ENCODE measurements at regions of chr15 and their contacts with region 1.

Region 1: DNA sequence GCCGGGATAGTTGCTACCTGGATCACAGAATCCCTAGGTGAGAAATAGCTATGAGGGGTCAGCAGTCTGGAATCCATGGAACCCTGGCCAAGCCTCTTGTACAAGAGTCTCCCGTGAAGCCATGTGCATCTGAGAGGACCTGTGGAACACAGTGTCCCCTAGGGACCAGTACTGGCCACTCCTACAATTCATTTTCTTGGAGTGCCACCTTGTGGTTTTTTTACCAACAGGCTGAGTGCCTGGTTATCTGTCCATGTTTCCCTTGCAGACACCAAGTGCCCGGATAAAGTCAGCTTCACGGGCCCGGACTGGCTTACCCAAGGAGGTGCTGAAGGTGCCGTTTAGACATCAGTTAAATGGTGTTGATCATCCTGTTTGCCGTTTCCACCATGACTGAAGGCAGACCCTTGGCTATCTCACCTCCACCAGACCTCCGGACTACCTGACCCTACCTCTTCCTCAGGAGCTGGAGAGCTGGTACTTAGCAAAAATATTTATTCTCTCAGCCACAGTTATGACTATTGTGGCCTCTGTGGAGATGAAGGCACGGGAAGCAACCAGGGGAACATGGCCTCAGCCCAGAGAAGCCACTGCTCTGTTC is 93.9 kb downstream of the RBPMS2 start:
- DNase-seq: peak in 1 of 2 donors; percentile 80
- H3K4me3 ChIP-seq: no peak overlapping the region
- CTCF ChIP-seq: peak in 1 of 3 donors; percentile 14
- POLR2A ChIP-seq: no peak

Region 2: GRCh38 chr15:65286704-65287519 is 605.4 kb after region 1 on chr15 and contains the start of gene PARP16:
- intact Hi-C with region 1: loop called (anchors 10 kb)
- DNase-seq: peak; percentile 86 to 98
- H3K4me3 ChIP-seq: peak within 1 kb of the TSS; percentile 75
- CTCF ChIP-seq: no peak
- POLR2A ChIP-seq: peak in 1 of 2 donors; percentile 75
- total RNA-seq, gene PARP16: 10.3 to 14.4 (median 11.3) TPM

Measured in lower leg skin (tissue), 4 donors.